IMR-90 (cell line): ENCODE measurements at regions of chr17 and their contacts with region 1.

Region 1: DNA sequence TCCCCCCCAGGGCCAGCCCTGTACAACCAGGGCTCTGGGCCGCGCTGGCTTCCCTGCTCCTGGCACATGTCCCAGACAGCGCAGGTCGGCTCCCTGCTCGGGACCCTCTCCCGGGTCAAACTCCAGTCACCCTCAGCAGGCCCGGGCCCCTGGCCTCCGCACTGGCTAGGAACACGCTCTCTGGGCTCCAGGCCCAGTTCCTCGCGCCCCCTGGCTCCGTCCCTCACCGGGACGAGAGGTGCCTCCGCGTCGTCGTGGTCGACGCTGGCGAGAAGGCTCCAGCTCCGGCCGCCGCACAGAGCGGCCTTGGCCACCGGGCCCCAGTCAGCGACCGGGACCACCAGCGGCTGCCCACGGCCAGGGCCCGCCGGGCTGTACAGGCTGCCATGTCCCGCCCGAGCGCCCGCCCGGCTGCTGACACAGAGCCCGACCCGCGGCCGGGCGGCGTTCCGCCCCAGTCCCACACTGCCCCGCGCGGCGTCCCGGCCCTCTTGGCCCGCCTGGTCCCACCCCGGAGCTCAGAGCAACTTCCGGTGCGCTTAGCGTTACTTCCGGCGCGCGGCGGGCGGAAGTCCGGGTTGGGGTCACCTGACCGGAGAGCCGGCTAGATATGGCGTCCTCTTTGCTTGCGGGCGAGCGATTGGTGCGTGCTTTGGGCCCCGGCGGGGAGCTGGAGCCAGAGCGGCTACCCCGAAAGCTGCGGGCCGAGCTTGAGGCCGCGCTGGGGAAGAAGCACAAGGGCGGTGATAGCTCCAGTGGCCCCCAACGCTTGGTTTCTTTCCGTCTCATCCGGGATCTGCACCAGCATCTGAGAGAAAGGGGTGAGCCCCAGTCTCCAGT is at the start of gene POLDIP2:
- DNase-seq: peak; percentile 92
- ATAC-seq: peak; percentile 99
- H3K4me3 ChIP-seq: peak within 1 kb of the TSS; percentile 80
- H3K27ac ChIP-seq: peak within 1 kb of the TSS; percentile 84
- H3K4me1 ChIP-seq: peaks cover 3% of the 10 kb centered on the region
- H3K27me3 ChIP-seq: no peaks in the 10 kb centered on the region
- CTCF ChIP-seq: 0 out of 2 replicates have a peak, but pooled peaks have one; percentile 5
- POLR2A ChIP-seq: peak; percentile 97
- RAD21 ChIP-seq: 0 out of 2 replicates have a peak, but pooled peaks have one; percentile 27
- total RNA-seq, gene POLDIP2: 58.3 and 66.7 TPM in 2 replicates

Region 2: GRCh38 chr17:28033972-28034714 is 323.1 kb before region 1 on chr17:
- CTCF ChIA-PET with region 1: no interaction called
- POLR2A ChIA-PET with region 1: interaction called, 10 read pairs
- dilution Hi-C with region 1: no loop called
- in situ Hi-C with region 1: no loop called
- intact Hi-C with region 1: no loop called
- DNase-seq: peak; percentile 91
- ATAC-seq: peak; percentile 88
- H3K4me3 ChIP-seq: no peak overlapping the region
- H3K27ac ChIP-seq: peak overlapping the region; percentile 50
- H3K4me1 ChIP-seq: peaks cover 7% of the 10 kb centered on the region; the same call in 1 of the 2 replicates
- H3K27me3 ChIP-seq: no peaks in the 10 kb centered on the region
- CTCF ChIP-seq: no peak
- POLR2A ChIP-seq: no peak
- RAD21 ChIP-seq: no peak

Region 3: GRCh38 chr17:28252436-28252835 is 104.8 kb before region 1 on chr17:
- CTCF ChIA-PET with region 1: no interaction called
- POLR2A ChIA-PET with region 1: no interaction called
- dilution Hi-C with region 1: no loop called
- in situ Hi-C with region 1: no loop called
- intact Hi-C with region 1: no loop called
- DNase-seq: peak; percentile 62
- ATAC-seq: peak; percentile 13; the same call in 1 of the 2 replicates
- H3K4me3 ChIP-seq: no peak overlapping the region
- H3K27ac ChIP-seq: no peak overlapping the region
- H3K4me1 ChIP-seq: no peaks in the 10 kb centered on the region
- H3K27me3 ChIP-seq: peaks cover 20% of the 10 kb centered on the region
- CTCF ChIP-seq: no peak
- POLR2A ChIP-seq: no peak
- RAD21 ChIP-seq: no peak

Region 4: DNA sequence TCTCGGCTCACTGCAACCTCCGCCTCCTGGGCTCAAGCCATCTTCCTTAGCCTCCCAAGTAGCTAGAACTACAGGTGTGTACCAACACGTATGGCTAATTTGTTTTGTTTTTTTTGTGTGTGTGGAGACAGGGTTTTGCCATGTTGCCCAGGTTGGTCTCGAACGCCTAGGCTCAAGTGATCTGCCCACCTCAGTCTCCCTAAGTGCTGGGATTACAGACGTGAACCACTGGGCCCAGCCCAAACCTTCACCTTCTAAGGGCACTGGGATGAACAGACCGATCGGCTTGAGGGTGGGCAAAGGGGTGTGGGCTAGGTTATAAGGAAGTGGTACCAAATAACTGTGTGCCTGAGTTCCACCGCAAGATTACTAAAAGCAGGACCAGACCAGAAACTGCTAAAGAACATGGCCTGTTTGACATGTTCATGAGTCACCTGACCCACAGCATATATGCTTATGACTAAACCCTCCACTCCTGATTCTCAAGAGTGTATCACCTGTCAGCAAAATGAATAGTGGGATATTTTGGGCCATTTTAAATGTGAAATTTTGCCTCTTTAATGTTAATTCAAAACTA is 30.2 kb before region 1 on chr17:
- CTCF ChIA-PET with region 1: no interaction called
- POLR2A ChIA-PET with region 1: no interaction called
- dilution Hi-C with region 1: no loop called
- in situ Hi-C with region 1: no loop called
- intact Hi-C with region 1: no loop called
- DNase-seq: peak; percentile 52
- ATAC-seq: no peak
- H3K4me3 ChIP-seq: no peak overlapping the region
- H3K27ac ChIP-seq: no peak overlapping the region
- H3K4me1 ChIP-seq: peaks cover 6% of the 10 kb centered on the region; the same call in 1 of the 2 replicates
- H3K27me3 ChIP-seq: no peaks in the 10 kb centered on the region
- CTCF ChIP-seq: no peak
- POLR2A ChIP-seq: no peak
- RAD21 ChIP-seq: no peak